ENCODE measurements at regions of chr2 and their contacts with region 1.

Region 1: GRCh38 chr2:218852911-218853667 is 6.5 kb upstream of the WNT6 start:
- DNase-seq: peak; percentile 74
- CTCF ChIP-seq: peak; percentile 84

Region 2: GRCh38 chr2:218727502-218728165 is 125.5 kb before region 1 on chr2:
- in situ Hi-C with region 1: loop called (anchors 10 kb)
- DNase-seq: no peak
- CTCF ChIP-seq: peak; percentile 14

Region 3: DNA sequence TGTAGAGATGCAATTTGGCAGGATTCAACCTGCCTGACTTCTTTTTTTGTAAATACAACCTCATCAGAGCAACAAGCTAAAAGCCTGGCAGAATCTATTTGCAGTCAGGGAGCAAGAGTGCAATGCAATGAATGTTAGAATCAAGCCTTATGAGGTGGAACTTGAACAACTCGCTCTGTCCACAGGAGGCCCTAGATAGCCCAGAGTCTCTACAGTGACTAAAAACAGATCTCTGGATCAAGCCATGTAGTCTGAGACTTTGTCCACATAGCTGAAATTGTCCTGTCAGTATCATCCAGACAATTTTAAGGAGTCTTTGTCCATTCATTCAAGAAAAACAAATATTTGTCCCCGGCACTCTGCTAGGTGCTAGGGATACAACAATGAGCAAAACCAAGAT is 74.3 kb after region 1 on chr2:
- in situ Hi-C with region 1: no loop called
- DNase-seq: no peak
- CTCF ChIP-seq: no peak

Region 4: GRCh38 chr2:218979846-218980734 is 127.0 kb after region 1 on chr2:
- in situ Hi-C with region 1: loop called (anchors 10 kb)
- DNase-seq: peak; percentile 90
- CTCF ChIP-seq: peak; percentile 96

Region 5: GRCh38 chr2:219229305-219230058 is 376.4 kb after region 1 on chr2 and contains the starts of genes ANKZF1 and ATG9A:
- in situ Hi-C with region 1: no loop called
- DNase-seq: peak; percentile 99
- CTCF ChIP-seq: no peak